CD14-positive monocyte (primary cell): ENCODE measurements at regions of chr4 and their contacts with region 1.

Region 1: GRCh38 chr4:155675709-155676429 is 9.2 kb downstream of the GUCY1A1 start:
- DNase-seq: peak; percentile 50 to 75 (median 66)
- H3K4me3 ChIP-seq: peak overlapping the region; percentile 4 to 66 (median 41)
- H3K4me3 Mint-ChIP-seq: peak overlapping the region; percentile 58 to 81
- H3K27ac ChIP-seq: peak overlapping the region in 1 of 2 donors; percentile 77
- H3K27ac Mint-ChIP-seq: peak overlapping the region; percentile 83 to 92 (median 87)
- H3K4me1 ChIP-seq: peaks cover 22 to 31% of the 10 kb centered on the region in 2 donors
- H3K4me1 Mint-ChIP-seq: peaks cover 31% of the 10 kb centered on the region
- H3K27me3 ChIP-seq: no peaks in the 10 kb centered on the region
- H3K27me3 Mint-ChIP-seq: peaks cover 0 to 2% (median 2%) of the 10 kb centered on the region in 3 donors
- CTCF ChIP-seq: no peak

Region 2: GRCh38 chr4:155758481-155759404 is 82.9 kb after region 1 on chr4 and contains the start of gene GUCY1B1:
- intact Hi-C with region 1: loop called in 1 of 2 experiments (anchors 10 kb)
- DNase-seq: peak; percentile 86 to 90 (median 90)
- H3K4me3 ChIP-seq: peak within 1 kb of the TSS; percentile 40 to 82 (median 48)
- H3K4me3 Mint-ChIP-seq: peak within 1 kb of the TSS; percentile 75 to 86
- H3K27ac ChIP-seq: peak within 1 kb of the TSS in 1 of 2 donors; percentile 9
- H3K27ac Mint-ChIP-seq: peak within 1 kb of the TSS in 1 of 7 donors; percentile 63
- H3K4me1 ChIP-seq: peaks cover 13 to 18% of the 10 kb centered on the region in 2 donors
- H3K4me1 Mint-ChIP-seq: peaks cover 10% of the 10 kb centered on the region
- H3K27me3 ChIP-seq: peaks cover 3 to 15% of the 10 kb centered on the region in 2 donors
- H3K27me3 Mint-ChIP-seq: peaks cover 8 to 21% (median 14%) of the 10 kb centered on the region in 3 donors
- CTCF ChIP-seq: no peak
- polyA plus RNA-seq, gene GUCY1B1: 0.60 to 0.89 (median 0.72) TPM

Region 3: GRCh38 chr4:155809835-155810234 is 134.0 kb after region 1 on chr4:
- intact Hi-C with region 1: no loop called
- DNase-seq: peak; percentile 19 to 51 (median 27)
- H3K4me3 ChIP-seq: no peak overlapping the region
- H3K4me3 Mint-ChIP-seq: no peak overlapping the region
- H3K27ac ChIP-seq: no peak overlapping the region
- H3K27ac Mint-ChIP-seq: no peak overlapping the region
- H3K4me1 ChIP-seq: no peaks in the 10 kb centered on the region
- H3K4me1 Mint-ChIP-seq: no peaks in the 10 kb centered on the region
- H3K27me3 ChIP-seq: no peaks in the 10 kb centered on the region
- H3K27me3 Mint-ChIP-seq: peaks cover 0 to 3% (median 3%) of the 10 kb centered on the region in 3 donors
- CTCF ChIP-seq: peak; percentile 76